Naive thymus-derived CD8-positive, alpha-beta T cell (primary cell): ENCODE measurements at regions of chr1 and their contacts with region 1.

Region 1: GRCh38 chr1:181149326-181150240 is 61.1 kb downstream of the IER5 start:
- DNase-seq: peak; percentile 48 to 89 (median 78)
- ATAC-seq: peak; percentile 100
- H3K4me3 Mint-ChIP-seq: peak overlapping the region; percentile 49 to 90 (median 84)
- H3K27ac Mint-ChIP-seq: peak overlapping the region; percentile 70 to 97 (median 92)
- H3K4me1 Mint-ChIP-seq: peaks cover 36 to 62% (median 59%) of the 10 kb centered on the region in 4 donors
- H3K27me3 Mint-ChIP-seq: no peaks in the 10 kb centered on the region

Region 2: GRCh38 chr1:181021811-181022434 is 127.7 kb before region 1 on chr1:
- POLR2A ChIA-PET with region 1: interaction called, 11 read pairs
- DNase-seq: peak in 9 of 10 donors; percentile 28 to 74 (median 44)
- ATAC-seq: peak; percentile 40 to 48
- H3K4me3 Mint-ChIP-seq: peak overlapping the region; percentile 89 to 99 (median 96)
- H3K27ac Mint-ChIP-seq: peak overlapping the region; percentile 87 to 100 (median 95)
- H3K4me1 Mint-ChIP-seq: peaks cover 25 to 52% (median 49%) of the 10 kb centered on the region in 4 donors
- H3K27me3 Mint-ChIP-seq: peaks cover 0 to 3% (median 0%) of the 10 kb centered on the region in 5 donors

Region 3: GRCh38 chr1:181044449-181044966 is 105.1 kb before region 1 on chr1:
- POLR2A ChIA-PET with region 1: no interaction called
- DNase-seq: peak in 4 of 10 donors; percentile 9 to 29 (median 12)
- ATAC-seq: peak; percentile 76 to 96
- H3K4me3 Mint-ChIP-seq: peak overlapping the region in 5 of 10 donors; percentile 7 to 46 (median 26)
- H3K27ac Mint-ChIP-seq: peak overlapping the region; percentile 53 to 93 (median 79)
- H3K4me1 Mint-ChIP-seq: peaks cover 25 to 49% (median 45%) of the 10 kb centered on the region in 4 donors
- H3K27me3 Mint-ChIP-seq: no peaks in the 10 kb centered on the region

Region 4: DNA sequence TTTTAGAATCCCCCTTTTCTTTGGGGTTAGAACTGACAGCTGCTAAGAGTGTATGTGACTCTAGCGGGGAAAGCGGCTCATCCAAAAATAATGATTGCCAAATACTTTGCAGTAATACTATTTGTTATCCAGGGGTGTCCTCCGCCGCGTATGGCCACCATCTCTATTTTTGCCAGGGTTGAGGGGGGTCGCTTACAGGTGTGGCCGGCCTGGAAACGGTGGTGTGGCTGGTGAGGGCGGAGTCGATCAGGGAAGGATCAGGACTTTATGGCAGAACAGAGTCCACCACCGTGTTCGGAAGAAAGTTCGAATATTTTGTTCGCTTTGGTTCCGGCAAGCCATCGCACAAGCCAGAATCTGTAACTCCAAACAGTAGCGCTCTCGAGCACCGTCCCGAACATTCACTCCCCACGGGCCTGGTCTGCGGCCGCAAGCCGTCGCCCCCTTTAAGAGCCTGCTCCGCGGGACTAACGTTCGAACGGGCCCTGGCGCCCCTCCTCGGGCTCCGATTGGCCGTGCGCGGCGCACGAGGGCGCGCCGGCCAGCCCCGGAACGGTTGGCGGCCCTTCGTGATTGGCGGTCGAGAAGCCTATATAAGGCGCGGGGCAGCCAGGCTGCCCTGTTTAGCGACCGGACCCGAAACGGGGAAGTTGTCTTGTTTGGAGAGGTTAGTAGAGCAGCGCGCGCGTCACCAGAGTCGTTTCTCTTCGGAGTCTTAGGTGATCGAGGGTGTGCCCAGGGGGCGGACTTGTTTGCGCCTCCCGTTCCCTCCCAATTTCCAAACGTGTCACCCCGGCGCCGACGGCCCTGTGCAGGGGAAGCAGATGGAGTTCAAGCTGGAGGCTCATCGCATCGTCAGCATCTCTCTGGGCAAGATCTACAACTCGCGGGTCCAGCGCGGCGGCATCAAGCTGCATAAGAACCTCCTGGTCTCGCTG is 61.2 kb before region 1 on chr1 and contains the start of gene IER5:
- POLR2A ChIA-PET with region 1: interaction called, 42 read pairs
- DNase-seq: peak; percentile 84 to 98 (median 94)
- ATAC-seq: peak; percentile 73 to 74
- H3K4me3 Mint-ChIP-seq: peak within 1 kb of the TSS; percentile 93 to 99 (median 99)
- H3K27ac Mint-ChIP-seq: peak within 1 kb of the TSS; percentile 93 to 99 (median 98)
- H3K4me1 Mint-ChIP-seq: peaks cover 28 to 57% (median 46%) of the 10 kb centered on the region in 4 donors
- H3K27me3 Mint-ChIP-seq: no peaks in the 10 kb centered on the region
- polyA plus RNA-seq, gene IER5: 2.5 to 9.4 (median 8.3) TPM

Region 5: DNA sequence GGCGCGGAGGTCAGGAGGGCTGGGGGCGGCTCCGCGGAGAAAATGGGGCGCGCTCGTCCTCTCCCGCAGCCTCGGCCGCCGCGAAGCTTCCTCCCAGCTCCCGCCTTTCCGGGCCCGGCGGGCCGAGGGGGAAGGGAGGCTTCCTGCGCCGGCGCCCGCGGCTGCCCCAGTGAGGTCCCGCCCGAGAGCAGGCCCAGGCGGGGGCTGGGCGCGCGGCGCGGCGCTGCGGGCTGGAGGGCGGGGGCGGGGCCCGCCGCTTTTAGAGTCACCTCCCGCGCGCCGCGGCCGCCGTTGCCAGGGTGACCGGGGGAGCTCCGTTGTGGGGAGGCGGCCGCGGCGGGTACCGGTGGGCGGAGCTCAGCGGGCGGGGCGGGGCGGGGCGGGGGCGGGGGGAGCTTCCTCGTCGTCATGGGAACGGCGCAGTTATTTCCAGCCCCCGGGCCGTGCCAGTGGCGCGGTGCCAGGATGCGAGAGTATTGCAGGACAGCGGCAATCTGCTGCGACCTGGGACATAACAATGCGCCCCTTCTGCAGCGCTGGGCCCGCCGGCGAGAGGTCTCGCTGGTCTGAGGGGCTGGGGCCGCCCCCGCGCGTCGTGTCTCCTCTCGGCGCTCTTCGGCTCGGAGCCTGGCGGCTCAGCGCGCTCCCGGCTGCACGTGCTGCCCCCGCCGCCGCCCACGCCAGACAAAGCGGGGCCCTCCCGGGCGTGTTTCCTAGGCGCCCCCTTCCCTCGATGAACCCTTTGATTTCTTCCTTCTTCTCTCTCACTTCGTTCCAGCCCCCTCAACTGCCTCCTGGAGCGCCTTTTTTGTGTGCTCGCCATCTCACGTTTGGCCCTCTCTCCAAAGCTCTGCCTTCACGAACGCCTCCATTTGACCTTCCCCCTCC is 44.2 kb before region 1 on chr1:
- POLR2A ChIA-PET with region 1: interaction called, 15 read pairs
- DNase-seq: peak; percentile 85 to 97 (median 90)
- ATAC-seq: peak; percentile 77 to 86
- H3K4me3 Mint-ChIP-seq: peak overlapping the region; percentile 80 to 98 (median 89)
- H3K27ac Mint-ChIP-seq: peak overlapping the region; percentile 81 to 98 (median 93)
- H3K4me1 Mint-ChIP-seq: peaks cover 25 to 61% (median 53%) of the 10 kb centered on the region in 4 donors
- H3K27me3 Mint-ChIP-seq: peaks cover 0 to 3% (median 0%) of the 10 kb centered on the region in 5 donors

Region 6: GRCh38 chr1:181159451-181160140 is 10.0 kb after region 1 on chr1:
- POLR2A ChIA-PET with region 1: interaction called, 30 read pairs
- DNase-seq: peak in 8 of 10 donors; percentile 40 to 80 (median 65)
- ATAC-seq: peak; percentile 85 to 86
- H3K4me3 Mint-ChIP-seq: peak overlapping the region; percentile 26 to 82 (median 56)
- H3K27ac Mint-ChIP-seq: peak overlapping the region; percentile 57 to 93 (median 86)
- H3K4me1 Mint-ChIP-seq: peaks cover 19 to 45% (median 41%) of the 10 kb centered on the region in 4 donors
- H3K27me3 Mint-ChIP-seq: no peaks in the 10 kb centered on the region

Region 7: GRCh38 chr1:181166377-181167196 is 17.0 kb after region 1 on chr1:
- POLR2A ChIA-PET with region 1: interaction called, 30 read pairs
- DNase-seq: peak; percentile 35 to 88 (median 77)
- ATAC-seq: peak; percentile 99 to 100
- H3K4me3 Mint-ChIP-seq: peak overlapping the region; percentile 34 to 83 (median 75)
- H3K27ac Mint-ChIP-seq: peak overlapping the region in 7 of 10 donors; percentile 57 to 90 (median 78)
- H3K4me1 Mint-ChIP-seq: peaks cover 3 to 8% (median 6%) of the 10 kb centered on the region in 4 donors
- H3K27me3 Mint-ChIP-seq: no peaks in the 10 kb centered on the region